AG04450 (cell line): ENCODE measurements at regions of chr3 and their contacts with region 1.

Region 1: DNA sequence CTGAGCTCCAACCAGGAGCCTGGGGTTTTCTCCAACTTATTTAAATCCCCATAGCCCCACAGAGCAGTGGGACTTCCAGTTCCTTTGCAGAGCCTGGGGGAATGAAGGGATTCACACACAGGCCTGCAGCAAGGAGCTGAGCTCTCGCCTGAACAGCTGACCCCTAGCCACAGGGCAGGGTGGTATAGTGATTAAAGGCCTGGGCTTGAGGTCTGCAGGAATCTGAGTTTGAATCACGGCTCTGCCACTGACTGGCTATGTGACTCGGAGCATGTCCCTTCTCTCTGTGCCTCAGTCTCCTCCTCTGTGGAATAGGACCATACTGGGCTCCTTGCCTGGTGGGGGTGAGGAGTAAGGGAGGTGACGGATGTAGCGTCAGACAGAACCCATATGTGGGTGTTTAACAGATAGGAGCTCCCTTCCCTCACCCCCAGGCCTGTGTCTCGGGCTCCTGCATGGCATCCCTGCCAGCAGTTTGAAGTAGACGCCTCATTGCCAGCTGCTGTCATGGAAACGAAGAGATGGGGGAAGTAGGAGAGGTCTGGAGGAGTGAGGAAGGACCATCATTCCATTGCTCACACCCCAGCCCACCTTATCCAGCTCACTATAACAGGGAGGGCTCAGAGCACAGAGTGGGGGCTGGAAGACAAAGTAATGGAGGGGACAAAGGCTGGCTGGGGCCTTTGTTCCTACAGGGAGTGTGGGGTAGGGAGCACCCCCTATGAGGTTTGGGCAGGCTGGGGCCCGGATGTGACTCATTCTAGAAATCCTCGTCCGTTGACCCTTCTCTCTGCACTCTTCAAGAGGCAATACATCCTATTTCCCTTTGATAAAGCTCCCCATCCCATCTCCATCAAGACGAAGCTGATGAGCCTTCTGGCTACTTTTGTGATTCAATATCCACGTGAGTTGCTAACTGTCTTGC is 14.8 kb downstream of the HRH1 start:
- DNase-seq: peak; percentile 32
- H3K4me3 ChIP-seq: no peak overlapping the region
- H3K27ac ChIP-seq: peak overlapping the region; percentile 94
- H3K27me3 ChIP-seq: no peaks in the 10 kb centered on the region
- CTCF ChIP-seq: no peak

Region 2: GRCh38 chr3:11155341-11156025 is 13.7 kb before region 1 on chr3:
- CTCF ChIA-PET with region 1: interaction called, 6 read pairs
- POLR2A ChIA-PET with region 1: interaction called, 10 read pairs
- DNase-seq: peak; percentile 60
- H3K4me3 ChIP-seq: peak overlapping the region; percentile 85
- H3K27ac ChIP-seq: peak overlapping the region; percentile 75
- H3K27me3 ChIP-seq: no peaks in the 10 kb centered on the region
- CTCF ChIP-seq: peak; percentile 96